Activated CD4-positive, alpha-beta T cell treated with anti-CD3 and anti-CD28 coated beads, Interleukin-2, amount 10 ng/mL, durations not matched to agents 24 days and 14 days (primary cell): ENCODE measurements at regions of chr19 and their contacts with region 1.

Region 1: DNA sequence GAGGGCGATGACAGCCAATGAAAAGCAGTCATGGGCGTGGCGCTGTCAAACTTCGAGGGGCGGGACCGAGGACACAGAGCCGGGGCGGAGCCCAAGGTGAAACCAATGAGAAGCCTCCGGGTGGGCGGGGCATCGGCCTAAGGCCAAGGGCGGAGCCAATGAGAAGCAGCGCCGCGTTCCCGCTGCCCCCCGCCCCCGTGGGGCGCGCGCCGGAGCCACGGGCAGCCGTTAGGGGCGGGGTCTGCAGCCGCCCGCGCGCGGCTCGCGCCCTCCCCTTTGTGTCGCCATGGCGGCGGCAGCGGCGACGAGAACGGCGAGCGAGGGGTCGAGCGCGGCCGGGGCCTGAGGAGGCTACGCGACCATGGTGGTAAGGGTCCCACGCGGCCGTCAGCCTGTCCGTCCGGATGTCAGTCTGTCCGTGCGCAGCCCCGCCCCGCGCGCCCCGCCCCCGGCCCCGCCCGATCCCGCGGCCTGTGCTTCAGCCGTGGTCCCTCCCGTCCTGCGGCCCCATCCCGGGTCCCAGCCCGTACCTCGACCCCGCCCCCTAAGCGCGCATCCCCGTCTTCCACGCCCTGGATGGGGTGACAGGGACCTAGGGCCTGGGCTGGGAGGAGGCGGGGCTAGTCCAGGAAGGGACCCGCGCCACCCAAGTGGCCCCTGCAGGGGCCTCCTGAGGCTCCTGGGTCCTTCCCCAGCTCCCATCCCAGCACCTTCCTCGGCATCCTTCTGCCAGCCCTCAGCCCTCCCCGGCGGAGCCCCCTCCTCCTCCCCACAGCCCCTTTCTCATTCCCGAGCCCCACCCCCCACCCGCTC is at the start of gene ARHGAP33:
- DNase-seq: peak; percentile 100
- H3K4me3 Mint-ChIP-seq: peak within 1 kb of the TSS; percentile 88
- H3K27ac Mint-ChIP-seq: peak within 1 kb of the TSS; percentile 71
- H3K4me1 Mint-ChIP-seq: peaks cover 26% of the 10 kb centered on the region
- H3K27me3 Mint-ChIP-seq: no peaks in the 10 kb centered on the region
- total RNA-seq, gene ARHGAP33: 24.6 and 26.4 TPM in 2 replicates

Region 2: GRCh38 chr19:35748106-35749020 is 27.1 kb before region 1 on chr19 and contains the start of gene LIN37:
- intact Hi-C with region 1: loop called (anchors 1 kb)
- DNase-seq: peak; percentile 100
- H3K4me3 Mint-ChIP-seq: peak within 1 kb of the TSS; percentile 99
- H3K27ac Mint-ChIP-seq: peak within 1 kb of the TSS; percentile 95
- H3K4me1 Mint-ChIP-seq: peaks cover 37% of the 10 kb centered on the region
- H3K27me3 Mint-ChIP-seq: no peaks in the 10 kb centered on the region
- total RNA-seq, gene LIN37: 7.7 and 11.1 TPM in 2 replicates

Region 3: DNA sequence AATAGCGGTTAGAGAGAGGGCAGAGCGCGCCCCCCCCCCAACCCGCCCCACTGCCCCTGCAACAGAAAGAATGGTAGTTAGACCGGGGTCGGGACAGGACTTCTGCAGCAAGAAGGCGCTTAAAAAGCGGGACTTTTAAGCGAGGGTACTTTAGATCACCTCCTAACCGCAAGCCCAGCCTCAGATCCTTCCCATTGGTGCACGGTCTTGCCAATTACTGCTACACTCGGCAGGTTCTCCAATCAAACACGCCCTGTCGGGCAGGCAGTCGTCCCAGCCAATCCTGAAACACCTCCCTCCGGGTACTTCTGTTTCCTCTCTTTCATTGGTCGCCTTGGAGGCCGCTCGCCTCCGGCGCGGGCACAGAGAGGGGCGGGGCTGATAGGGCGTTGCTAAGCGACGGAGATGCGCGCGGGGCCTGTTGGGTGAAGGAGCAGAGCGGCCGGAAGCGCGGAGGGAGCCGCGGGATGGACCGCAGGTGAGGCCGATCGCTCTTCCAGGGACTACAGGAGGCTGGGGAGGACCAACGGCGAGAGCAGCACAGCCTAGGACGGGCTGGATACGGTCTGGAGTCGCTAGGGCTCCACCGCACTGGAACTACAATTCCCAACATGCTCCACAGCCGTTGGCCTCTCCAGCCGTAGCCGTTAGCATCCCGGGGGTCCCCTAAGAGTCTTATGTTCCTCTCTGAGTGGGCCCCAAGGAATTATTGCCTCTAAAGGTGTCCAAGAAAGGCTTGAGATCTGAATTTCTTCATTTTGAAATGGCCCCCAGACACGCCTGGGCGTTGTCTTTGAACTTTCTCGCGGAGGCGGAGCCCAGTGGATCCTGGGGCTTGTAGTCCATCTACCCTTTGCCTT is 17.5 kb before region 1 on chr19 and contains the start of gene PROSER3:
- intact Hi-C with region 1: loop called (anchors 1 kb)
- DNase-seq: peak; percentile 100
- H3K4me3 Mint-ChIP-seq: peak within 1 kb of the TSS; percentile 95
- H3K27ac Mint-ChIP-seq: peak within 1 kb of the TSS; percentile 98
- H3K4me1 Mint-ChIP-seq: peaks cover 25% of the 10 kb centered on the region
- H3K27me3 Mint-ChIP-seq: peaks cover 2% of the 10 kb centered on the region
- total RNA-seq, gene PROSER3: 35.2 and 43.6 TPM in 2 replicates

Region 4: GRCh38 chr19:35869327-35870123 is 94.0 kb after region 1 on chr19:
- intact Hi-C with region 1: loop called (anchors 5 kb)
- DNase-seq: peak; percentile 96
- H3K4me3 Mint-ChIP-seq: peak overlapping the region; percentile 94
- H3K27ac Mint-ChIP-seq: peak overlapping the region; percentile 56
- H3K4me1 Mint-ChIP-seq: peaks cover 18% of the 10 kb centered on the region
- H3K27me3 Mint-ChIP-seq: peaks cover 25% of the 10 kb centered on the region